Thyroid gland (tissue), 4 donors: ENCODE measurements at regions of chr11 and their contacts with region 1.

Region 1: DNA sequence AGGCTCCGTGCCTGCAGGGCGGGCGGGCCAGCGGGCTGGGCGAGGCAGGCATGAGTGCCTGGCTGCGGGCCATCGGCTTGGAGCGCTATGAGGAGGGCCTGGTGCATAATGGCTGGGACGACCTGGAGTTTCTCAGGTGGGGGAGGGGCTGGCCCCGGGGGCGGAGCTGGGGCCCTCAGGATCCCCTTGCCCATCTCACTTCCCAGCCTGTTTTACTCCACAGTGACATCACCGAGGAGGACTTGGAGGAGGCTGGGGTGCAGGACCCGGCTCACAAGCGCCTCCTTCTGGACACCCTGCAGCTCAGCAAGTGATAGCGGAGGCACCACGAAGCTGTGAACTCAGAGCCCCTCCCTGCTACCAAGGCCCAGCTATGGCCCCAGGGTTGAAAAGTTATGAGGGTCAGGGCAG is 5.9 kb downstream of the PHOX2A start:
- DNase-seq: peak; percentile 74 to 75
- H3K4me3 ChIP-seq: no peak overlapping the region
- H3K27ac ChIP-seq: no peak overlapping the region
- H3K4me1 ChIP-seq: peaks cover 24 to 30% of the 10 kb centered on the region in 2 donors
- H3K27me3 ChIP-seq: no peaks in the 10 kb centered on the region
- CTCF ChIP-seq: peak in 5 of 6 experiments; percentile 23 to 74 (median 63)
- POLR2A ChIP-seq: no peak

Region 2: GRCh38 chr11:72425053-72425980 is 187.3 kb after region 1 on chr11:
- intact Hi-C with region 1: loop called (anchors 10 kb)
- DNase-seq: no peak
- H3K4me3 ChIP-seq: no peak overlapping the region
- H3K27ac ChIP-seq: no peak overlapping the region
- H3K4me1 ChIP-seq: peaks cover 3 to 10% of the 10 kb centered on the region in 2 donors
- H3K27me3 ChIP-seq: no peaks in the 10 kb centered on the region
- CTCF ChIP-seq: no peak
- POLR2A ChIP-seq: no peak